ENCODE measurements at regions of chr6 and their contacts with region 1.

Region 1: DNA sequence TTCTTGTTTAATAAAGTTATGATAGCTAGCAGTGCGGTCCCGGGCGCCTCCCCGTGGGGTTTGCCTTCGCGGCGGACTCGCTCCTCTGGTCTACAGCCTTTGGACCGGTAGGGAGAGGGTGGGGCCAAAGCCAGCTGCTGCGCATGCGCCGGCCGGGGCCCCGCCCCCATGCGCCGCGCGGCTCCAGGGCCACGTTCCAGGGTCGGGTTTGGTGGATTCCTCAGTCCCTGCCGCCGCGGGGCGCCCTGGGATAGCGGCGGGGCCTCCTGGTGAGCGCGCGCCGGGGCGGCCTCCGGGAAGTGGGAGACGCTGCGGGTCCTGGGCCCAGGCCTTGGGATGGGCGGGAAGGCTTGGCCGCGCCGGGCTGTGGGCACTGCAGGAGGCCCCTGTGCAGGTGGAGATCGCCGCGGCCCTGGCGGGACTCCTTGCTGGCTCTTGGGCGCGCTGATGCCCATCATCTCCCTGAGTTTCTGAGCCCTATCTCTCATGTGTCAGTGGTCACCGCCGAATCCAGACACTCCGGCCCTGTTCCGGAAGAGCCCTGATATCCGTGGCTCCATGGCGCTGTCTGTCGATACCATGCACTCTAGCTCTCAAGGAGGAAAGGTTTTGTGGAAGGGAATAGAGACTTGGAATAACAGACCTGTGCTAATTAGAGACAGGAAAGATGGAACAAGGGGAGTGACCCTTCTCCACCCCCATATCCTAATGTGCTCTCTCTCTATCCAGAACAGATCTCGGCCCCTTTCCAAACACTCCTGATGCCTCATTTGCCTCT is at the start of gene VARS2:
- DNase-seq: peak; percentile 80
- ATAC-seq: peak; percentile 92
- H3K4me3 ChIP-seq: peak within 1 kb of the TSS; percentile 58 to 72
- H3K27ac ChIP-seq: peak within 1 kb of the TSS; percentile 71
- H3K4me1 ChIP-seq: peaks cover 9 to 26% of the 10 kb centered on the region in 2 experiments; a peak in 3 of 4 replicates
- H3K27me3 ChIP-seq: no peaks in the 10 kb centered on the region
- CTCF ChIP-seq: peak in 1 of 3 experiments; percentile 22; a peak in 2 of 6 replicates
- POLR2A ChIP-seq: peak; percentile 58
- RAD21 ChIP-seq: no peak
- total RNA-seq, gene VARS2: 39.8 TPM

Region 2: GRCh38 chr6:30828027-30828960 is 86.0 kb before region 1 on chr6:
- CTCF ChIA-PET with region 1: interaction called, 8 read pairs
- POLR2A ChIA-PET with region 1: interaction called, 8 read pairs
- RAD21 ChIA-PET with region 1: interaction called, 3 to 5 read pairs
- intact Hi-C with region 1: loop called (anchors 1 kb)
- DNase-seq: no peak
- ATAC-seq: peak; percentile 87
- H3K4me3 ChIP-seq: no peak overlapping the region
- H3K27ac ChIP-seq: peak overlapping the region; percentile 22
- H3K4me1 ChIP-seq: peaks cover 23 to 47% of the 10 kb centered on the region in 2 experiments
- H3K27me3 ChIP-seq: no peaks in the 10 kb centered on the region
- CTCF ChIP-seq: peak; percentile 91 to 96 (median 95)
- POLR2A ChIP-seq: no peak
- RAD21 ChIP-seq: peak; percentile 99

Region 3: GRCh38 chr6:31068669-31069340 is 154.5 kb after region 1 on chr6:
- CTCF ChIA-PET with region 1: interaction called, 44 read pairs
- POLR2A ChIA-PET with region 1: interaction called, 4 read pairs
- RAD21 ChIA-PET with region 1: interaction called, 4 to 5 read pairs
- intact Hi-C with region 1: loop called (anchors 1 kb)
- DNase-seq: peak; percentile 81
- ATAC-seq: peak; percentile 94
- H3K4me3 ChIP-seq: no peak overlapping the region
- H3K27ac ChIP-seq: no peak overlapping the region
- H3K4me1 ChIP-seq: peaks cover 4 to 14% of the 10 kb centered on the region in 2 experiments; a peak in 3 of 4 replicates
- H3K27me3 ChIP-seq: no peaks in the 10 kb centered on the region
- CTCF ChIP-seq: peak; percentile 88 to 92 (median 91)
- POLR2A ChIP-seq: no peak
- RAD21 ChIP-seq: peak; percentile 82

Region 4: GRCh38 chr6:31114970-31115849 is 200.9 kb after region 1 on chr6:
- CTCF ChIA-PET with region 1: interaction called, 11 read pairs
- POLR2A ChIA-PET with region 1: no interaction called
- RAD21 ChIA-PET with region 1: no interaction called
- intact Hi-C with region 1: no loop called
- DNase-seq: peak; percentile 58
- ATAC-seq: peak; percentile 74
- H3K4me3 ChIP-seq: peak overlapping the region; percentile 51 to 64
- H3K27ac ChIP-seq: peak overlapping the region; percentile 83
- H3K4me1 ChIP-seq: peaks cover 29 to 49% of the 10 kb centered on the region in 2 experiments
- H3K27me3 ChIP-seq: no peaks in the 10 kb centered on the region
- CTCF ChIP-seq: peak; percentile 52 to 55 (median 53); a peak in 5 of 6 replicates
- POLR2A ChIP-seq: no peak
- RAD21 ChIP-seq: peak; percentile 60

Region 5: DNA sequence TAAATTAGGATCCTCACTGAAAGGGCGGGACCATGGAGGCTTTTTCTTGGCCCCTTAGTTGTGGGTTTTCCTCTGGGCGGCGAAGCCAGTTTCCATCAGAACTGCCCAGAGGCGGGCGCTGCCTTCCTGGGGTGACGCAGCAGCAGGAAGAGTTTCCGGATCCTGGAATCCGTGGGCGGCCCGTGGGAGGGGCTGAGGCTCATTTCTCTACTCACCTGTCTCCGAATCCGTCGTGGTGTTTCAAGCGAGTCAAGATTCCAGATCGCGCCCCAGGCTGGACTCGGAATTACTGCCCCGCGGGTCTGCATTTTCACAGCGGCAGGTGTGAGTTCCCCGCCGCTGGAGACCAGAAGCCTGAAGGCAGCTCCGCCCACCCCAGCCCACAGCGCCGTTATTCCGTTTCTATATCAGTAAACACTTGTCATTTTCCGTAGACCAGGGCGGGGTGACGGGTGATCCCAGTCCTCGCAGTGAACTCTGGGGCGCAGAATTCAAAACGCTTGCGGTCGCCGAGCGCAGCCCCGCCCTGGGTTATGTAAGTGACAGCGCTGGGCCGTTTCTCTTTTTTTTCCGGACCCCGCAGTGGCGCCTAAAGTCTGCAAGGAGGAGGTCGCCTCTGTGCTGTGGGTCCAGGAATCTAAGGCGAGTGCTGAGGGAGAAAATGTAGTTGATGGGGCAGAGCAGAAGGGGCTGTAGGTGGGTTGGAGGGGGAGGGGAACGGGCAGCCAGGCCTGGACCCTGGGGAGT is 283.5 kb after region 1 on chr6:
- CTCF ChIA-PET with region 1: no interaction called
- POLR2A ChIA-PET with region 1: no interaction called
- RAD21 ChIA-PET with region 1: no interaction called
- intact Hi-C with region 1: loop called (anchors 2 kb)
- DNase-seq: peak; percentile 66
- ATAC-seq: peak; percentile 81
- H3K4me3 ChIP-seq: peak overlapping the region; percentile 79 to 88
- H3K27ac ChIP-seq: peak overlapping the region; percentile 95
- H3K4me1 ChIP-seq: peaks cover 12 to 30% of the 10 kb centered on the region in 2 experiments
- H3K27me3 ChIP-seq: no peaks in the 10 kb centered on the region
- CTCF ChIP-seq: no peak
- POLR2A ChIP-seq: peak; percentile 38
- RAD21 ChIP-seq: 0 out of 2 replicates have a peak, but pooled peaks have one; percentile 5